Head of caudate nucleus (tissue), 42 donors: ENCODE measurements at regions of chr15 and their contacts with region 1.

Region 1: GRCh38 chr15:40578892-40579291 is 9.8 kb downstream of the RPUSD2 start:
- DNase-seq: no peak

Region 2: DNA sequence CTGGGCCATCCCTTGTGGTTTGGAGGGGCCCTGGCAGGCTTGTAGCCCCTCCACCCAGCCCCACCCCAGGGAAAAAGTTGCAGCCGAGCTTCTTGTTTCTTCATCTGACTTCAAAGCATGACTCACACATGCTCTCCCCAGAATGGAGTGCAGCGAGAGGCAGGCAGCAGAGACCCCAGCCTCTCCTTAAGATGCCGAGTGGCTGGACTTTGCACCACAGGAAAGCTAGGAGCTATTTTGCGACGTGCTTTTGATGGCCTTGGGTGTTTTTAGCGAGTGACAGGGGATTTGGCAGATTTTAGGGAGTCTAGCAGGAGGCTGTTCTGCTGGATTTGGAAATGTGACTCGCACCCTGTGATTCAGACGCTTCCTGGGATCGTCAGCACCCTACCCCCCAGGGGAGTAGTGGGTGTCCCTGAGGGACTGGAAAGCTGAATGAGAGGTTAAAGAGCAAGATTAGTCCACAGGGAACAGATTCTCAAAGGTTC is 123.9 kb before region 1 on chr15:
- intact Hi-C with region 1: loop called (anchors 10 kb)
- DNase-seq: peak in 13 of 42 donors; percentile 15 to 56 (median 42)